Vagina (tissue), 2 donors: ENCODE measurements at regions of chr10 and their contacts with region 1.

Region 1: DNA sequence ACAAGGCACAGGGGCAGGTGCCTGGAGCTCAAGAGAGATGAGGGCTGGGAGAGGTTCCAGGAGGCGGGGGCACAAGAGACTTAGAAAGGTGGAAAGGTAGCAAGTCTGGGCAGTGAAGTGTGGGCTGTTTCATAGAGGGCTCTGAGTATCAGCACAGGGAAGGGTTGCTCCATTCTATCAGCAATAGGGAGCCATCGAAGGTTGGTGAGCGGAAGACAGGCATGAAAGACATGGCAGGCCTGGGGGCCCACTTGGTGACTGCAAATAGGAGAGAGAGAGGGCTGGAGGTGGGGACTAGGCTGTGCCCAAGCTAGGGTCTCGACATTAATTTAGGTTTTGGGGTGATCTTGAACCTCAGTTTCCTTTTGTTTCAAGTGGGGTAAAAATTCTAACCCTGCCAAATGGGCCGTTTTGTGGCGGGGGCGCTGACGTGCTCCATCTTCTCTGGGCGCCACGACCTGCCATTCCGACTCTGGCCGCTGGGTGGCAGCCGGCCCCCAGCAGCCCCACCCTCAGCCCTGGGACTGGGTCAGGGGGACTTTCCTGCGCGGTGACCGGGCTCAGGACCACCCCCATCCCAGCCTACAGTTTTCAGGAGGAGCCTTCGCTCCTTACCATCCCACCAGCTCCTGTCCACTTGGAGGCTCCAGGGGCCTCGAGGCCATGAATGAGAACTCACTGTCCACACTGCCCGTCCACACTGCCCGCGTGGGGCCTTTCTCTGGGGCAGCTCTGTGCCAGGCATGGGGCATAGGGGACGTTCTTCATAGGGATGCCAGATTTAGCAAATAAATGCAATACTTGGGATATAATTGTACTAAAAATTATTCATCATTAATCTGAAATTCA is 37.2 kb upstream of the PCBD1 start:
- DNase-seq: no peak
- H3K4me3 ChIP-seq: no peak overlapping the region
- H3K27ac ChIP-seq: no peak overlapping the region
- H3K4me1 ChIP-seq: no peaks in the 10 kb centered on the region
- H3K27me3 ChIP-seq: no peaks in the 10 kb centered on the region
- CTCF ChIP-seq: peak; percentile 50 to 88 (median 83)
- POLR2A ChIP-seq: no peak

Region 2: DNA sequence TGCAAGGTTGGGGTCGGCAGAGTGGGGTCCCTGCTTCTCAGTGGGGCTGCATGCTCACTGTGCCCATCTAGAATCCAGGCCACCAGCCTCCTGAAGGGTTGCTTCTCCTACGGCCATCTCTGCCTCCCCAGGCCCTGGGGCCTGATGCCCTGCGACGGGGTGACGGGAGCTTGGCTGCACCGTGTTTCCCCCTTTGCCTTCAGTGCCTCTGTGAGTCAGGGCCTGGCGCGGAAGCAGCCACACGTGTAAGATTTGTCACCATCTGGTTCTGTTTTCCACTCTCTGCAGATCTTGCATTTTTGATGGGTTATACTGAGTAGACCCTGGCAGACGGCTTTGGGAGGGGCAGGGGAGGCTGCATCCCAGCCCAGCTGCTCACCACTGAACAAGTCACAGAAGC is 246.1 kb before region 1 on chr10:
- intact Hi-C with region 1: no loop called
- DNase-seq: no peak
- H3K4me3 ChIP-seq: no peak overlapping the region
- H3K27ac ChIP-seq: no peak overlapping the region
- H3K4me1 ChIP-seq: peaks cover 13% of the 10 kb centered on the region
- H3K27me3 ChIP-seq: no peaks in the 10 kb centered on the region
- CTCF ChIP-seq: no peak
- POLR2A ChIP-seq: no peak

Region 3: DNA sequence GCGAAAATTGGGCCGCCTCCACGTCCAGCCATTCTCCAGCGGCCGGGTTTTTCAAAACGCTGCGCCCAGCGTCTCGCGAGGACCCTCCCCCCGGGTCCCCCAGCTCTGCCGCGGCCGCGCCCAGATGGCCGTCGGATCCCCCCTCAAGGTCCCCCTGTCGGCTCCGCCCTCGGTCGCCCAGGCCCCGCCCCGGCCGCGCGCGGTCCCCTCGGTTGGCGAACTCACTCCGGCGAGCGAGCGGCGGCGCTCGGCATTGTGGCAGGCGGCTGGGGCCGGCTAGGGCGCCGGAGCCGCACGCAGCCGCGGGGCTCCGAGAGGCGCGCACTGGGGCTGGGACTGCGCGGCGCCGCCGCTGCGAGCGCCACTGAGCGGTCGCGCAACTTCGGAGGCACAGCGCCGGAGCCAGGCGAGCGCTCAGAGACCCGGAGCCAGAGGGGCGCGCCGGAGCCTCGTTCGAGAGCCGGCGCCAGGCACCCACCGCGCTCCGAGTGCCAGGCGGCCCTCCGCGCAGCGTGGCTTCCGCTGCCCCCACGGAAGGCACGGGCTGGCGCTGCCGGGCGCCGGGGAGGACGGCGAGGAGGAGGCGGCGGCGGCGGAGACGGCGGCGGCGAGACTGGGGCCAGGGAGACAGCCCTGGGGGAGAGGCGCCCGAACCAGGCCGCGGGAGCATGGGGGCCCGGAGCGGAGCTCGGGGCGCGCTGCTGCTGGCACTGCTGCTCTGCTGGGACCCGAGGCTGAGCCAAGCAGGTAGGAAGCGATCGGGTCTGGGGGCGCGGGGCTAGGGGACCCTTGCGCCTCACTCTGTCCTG is 286.9 kb after region 1 on chr10 and contains the start of gene UNC5B:
- intact Hi-C with region 1: loop called (anchors 10 kb)
- DNase-seq: no peak
- H3K4me3 ChIP-seq: peak within 1 kb of the TSS; percentile 62 to 77
- H3K27ac ChIP-seq: peak within 1 kb of the TSS; percentile 89
- H3K4me1 ChIP-seq: peaks cover 48% of the 10 kb centered on the region
- H3K27me3 ChIP-seq: no peaks in the 10 kb centered on the region
- CTCF ChIP-seq: no peak
- POLR2A ChIP-seq: peak in 1 of 2 donors; percentile 92
- total RNA-seq, gene UNC5B: 24.3 TPM

Region 4: GRCh38 chr10:71285180-71285545 is 359.6 kb after region 1 on chr10:
- intact Hi-C with region 1: loop called (anchors 5 kb)
- DNase-seq: no peak
- H3K4me3 ChIP-seq: no peak overlapping the region
- H3K27ac ChIP-seq: no peak overlapping the region
- H3K4me1 ChIP-seq: no peaks in the 10 kb centered on the region
- H3K27me3 ChIP-seq: no peaks in the 10 kb centered on the region
- CTCF ChIP-seq: peak; percentile 52 to 79 (median 70)
- POLR2A ChIP-seq: no peak